Activated B cell treated with CpG ODN at 0.5 μM for 24 hours (primary cell): ENCODE measurements at regions of chr11 and their contacts with region 1.

Region 1: DNA sequence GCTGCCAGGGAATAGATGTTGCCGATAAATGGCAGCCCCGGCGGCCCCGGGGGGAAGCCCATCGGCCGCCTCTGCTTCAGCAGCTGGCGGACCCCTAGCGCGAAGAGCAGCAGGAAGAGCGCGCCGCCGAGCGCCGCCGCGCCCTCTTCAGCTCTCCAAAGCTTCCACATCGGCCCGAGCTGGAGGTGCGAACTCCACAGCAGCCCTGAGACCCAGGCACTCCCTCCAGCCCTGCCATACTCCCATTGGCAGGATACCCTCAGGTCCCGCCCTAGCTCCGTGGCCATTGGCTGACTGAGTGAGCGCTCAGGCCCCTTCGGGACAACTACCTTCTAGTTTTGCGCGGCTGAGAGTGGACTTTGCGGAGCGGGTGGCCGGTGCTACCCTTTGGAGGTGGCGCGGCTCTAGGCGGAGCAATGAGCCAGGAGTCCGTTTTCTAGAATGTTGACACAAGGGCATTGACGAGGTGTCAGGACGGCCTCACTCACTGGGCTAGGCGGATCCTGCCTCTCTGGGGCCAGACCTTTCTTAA is at the start of gene CYP2R1:
- DNase-seq: peak; percentile 85
- ATAC-seq: peak; percentile 84
- H3K4me3 Mint-ChIP-seq: peak within 1 kb of the TSS; percentile 94
- H3K27ac Mint-ChIP-seq: peak within 1 kb of the TSS; percentile 97
- H3K4me1 Mint-ChIP-seq: peaks cover 26% of the 10 kb centered on the region
- H3K27me3 Mint-ChIP-seq: no peaks in the 10 kb centered on the region
- CTCF ChIP-seq: no peak
- total RNA-seq, gene CYP2R1: 20.1 and 22.0 TPM in 2 replicates

Region 2: GRCh38 chr11:13276832-13277767 is 1615.0 kb before region 1 on chr11:
- CTCF ChIA-PET with region 1: no interaction called
- POLR2A ChIA-PET with region 1: no interaction called
- intact Hi-C with region 1: loop called (anchors 1 kb)
- DNase-seq: peak; percentile 92
- ATAC-seq: peak; percentile 87
- H3K4me3 Mint-ChIP-seq: peak overlapping the region; percentile 97
- H3K27ac Mint-ChIP-seq: peak overlapping the region; percentile 82
- H3K4me1 Mint-ChIP-seq: peaks cover 36% of the 10 kb centered on the region
- H3K27me3 Mint-ChIP-seq: peaks cover 6% of the 10 kb centered on the region
- CTCF ChIP-seq: no peak

Region 3: DNA sequence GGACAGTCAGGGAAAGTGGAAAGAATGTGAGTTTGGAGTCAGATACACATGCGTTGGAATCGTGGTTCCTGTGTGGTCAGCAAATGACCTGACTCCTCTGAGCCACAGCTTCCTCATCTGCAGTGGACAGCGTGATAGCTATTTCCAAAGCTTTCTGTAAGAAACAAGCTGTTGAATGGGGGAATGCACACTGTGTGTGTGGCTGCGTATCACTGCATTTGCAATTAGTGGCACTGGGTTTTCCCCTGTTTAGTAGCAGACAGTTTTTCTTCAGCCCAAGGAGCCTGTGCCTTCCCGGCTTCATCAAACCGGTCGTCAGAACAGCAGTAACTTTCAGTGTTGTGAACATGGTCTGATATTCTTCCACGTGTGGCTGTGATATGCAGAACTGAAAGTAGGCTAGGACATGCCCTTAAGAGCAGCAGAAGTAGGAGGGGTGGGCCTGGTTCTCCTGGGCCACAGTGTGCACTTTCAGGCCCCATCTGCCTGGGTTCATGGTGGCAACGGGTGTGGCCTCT is 654.6 kb before region 1 on chr11:
- CTCF ChIA-PET with region 1: no interaction called
- POLR2A ChIA-PET with region 1: no interaction called
- intact Hi-C with region 1: loop called (anchors 1 kb)
- DNase-seq: peak; percentile 42
- ATAC-seq: peak; percentile 97
- H3K4me3 Mint-ChIP-seq: peak overlapping the region; percentile 42
- H3K27ac Mint-ChIP-seq: peak overlapping the region; percentile 89
- H3K4me1 Mint-ChIP-seq: peaks cover 39% of the 10 kb centered on the region
- H3K27me3 Mint-ChIP-seq: peaks cover 1% of the 10 kb centered on the region
- CTCF ChIP-seq: no peak

Region 4: GRCh38 chr11:14519917-14520746 is 372.0 kb before region 1 on chr11 and contains the start of gene PSMA1:
- CTCF ChIA-PET with region 1: interaction called, 3 read pairs
- POLR2A ChIA-PET with region 1: interaction called, 34 read pairs
- intact Hi-C with region 1: loop called (anchors 1 kb)
- DNase-seq: peak; percentile 82
- ATAC-seq: peak; percentile 91
- H3K4me3 Mint-ChIP-seq: peak within 1 kb of the TSS; percentile 96
- H3K27ac Mint-ChIP-seq: peak within 1 kb of the TSS; percentile 95
- H3K4me1 Mint-ChIP-seq: peaks cover 27% of the 10 kb centered on the region
- H3K27me3 Mint-ChIP-seq: no peaks in the 10 kb centered on the region
- CTCF ChIP-seq: no peak
- total RNA-seq, gene PSMA1: 184 and 198 TPM in 2 replicates

Region 5: DNA sequence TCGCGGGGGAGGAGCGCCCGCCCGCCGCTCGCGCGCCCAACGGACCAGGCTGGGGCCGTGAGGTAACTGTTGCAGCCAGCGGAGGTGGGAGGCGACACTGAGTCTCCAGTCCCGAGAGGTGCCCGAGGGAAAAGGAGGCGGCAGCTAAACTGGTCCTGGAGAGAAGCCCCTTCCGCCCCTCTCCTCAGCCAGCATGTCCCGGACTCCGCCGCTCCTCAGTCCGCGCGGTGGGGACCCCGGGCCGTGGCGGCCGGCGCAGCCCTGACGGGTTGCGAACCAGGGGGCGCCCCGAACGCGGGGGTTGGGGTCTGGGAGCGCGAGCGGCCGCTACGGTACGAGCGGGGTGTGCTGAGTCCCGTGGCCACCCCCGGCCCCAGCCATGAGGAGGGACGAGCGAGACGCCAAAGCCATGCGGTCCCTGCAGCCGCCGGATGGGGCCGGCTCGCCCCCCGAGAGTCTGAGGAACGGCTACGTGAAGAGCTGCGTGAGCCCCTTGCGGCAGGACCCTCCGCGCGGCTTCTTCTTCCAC is 248.3 kb before region 1 on chr11 and contains the start of gene PDE3B:
- CTCF ChIA-PET with region 1: no interaction called
- POLR2A ChIA-PET with region 1: interaction called, 24 read pairs
- intact Hi-C with region 1: loop called (anchors 2 kb)
- DNase-seq: peak; percentile 56
- ATAC-seq: peak; percentile 72
- H3K4me3 Mint-ChIP-seq: peak within 1 kb of the TSS; percentile 86
- H3K27ac Mint-ChIP-seq: no peak within 1 kb of the TSS
- H3K4me1 Mint-ChIP-seq: peaks cover 10% of the 10 kb centered on the region
- H3K27me3 Mint-ChIP-seq: peaks cover 17% of the 10 kb centered on the region
- CTCF ChIP-seq: no peak
- total RNA-seq, gene PDE3B: 11.3 and 13.4 TPM in 2 replicates

Region 6: DNA sequence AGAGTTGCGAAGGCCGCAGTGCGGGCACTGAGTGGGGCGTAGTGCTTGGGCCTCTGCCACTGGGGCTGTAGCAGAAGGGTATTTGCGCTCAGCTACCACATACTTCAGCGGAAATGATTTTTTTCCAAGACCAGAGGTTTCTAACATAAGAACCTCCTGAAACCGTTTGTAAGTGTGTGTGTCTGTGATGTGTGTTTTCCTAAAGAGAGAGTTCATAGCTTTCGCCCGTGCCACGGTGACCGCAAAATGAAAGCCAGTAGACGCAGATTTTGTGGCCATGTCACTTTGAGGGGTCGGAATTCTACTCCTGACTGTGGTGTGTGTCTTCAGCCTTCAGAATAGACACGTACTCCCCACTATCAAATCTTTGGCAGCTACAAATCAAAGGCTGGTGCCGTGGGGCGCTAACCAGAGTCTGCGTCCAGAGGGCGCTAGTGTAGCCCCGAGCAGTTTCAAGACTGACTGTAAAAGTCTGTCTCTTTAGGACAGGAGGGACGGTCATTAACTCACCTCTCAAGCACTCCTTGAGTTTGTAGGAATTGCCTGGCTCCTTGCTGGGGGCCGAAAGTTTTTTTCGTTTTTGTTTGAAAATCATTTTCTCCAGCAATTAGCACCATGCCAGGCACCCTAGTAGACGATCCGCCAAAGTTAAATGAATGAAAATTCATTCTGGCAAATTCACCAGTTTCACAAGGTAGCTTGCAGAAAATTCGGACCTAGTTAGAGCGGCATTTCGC is 82.6 kb after region 1 on chr11:
- CTCF ChIA-PET with region 1: no interaction called
- POLR2A ChIA-PET with region 1: interaction called, 8 read pairs
- intact Hi-C with region 1: loop called (anchors 5 kb)
- DNase-seq: no peak
- ATAC-seq: peak; percentile 51
- H3K4me3 Mint-ChIP-seq: peak overlapping the region; percentile 62
- H3K27ac Mint-ChIP-seq: no peak overlapping the region
- H3K4me1 Mint-ChIP-seq: peaks cover 30% of the 10 kb centered on the region
- H3K27me3 Mint-ChIP-seq: peaks cover 62% of the 10 kb centered on the region
- CTCF ChIP-seq: no peak